Heart right ventricle (tissue), 16 donors: ENCODE measurements at regions of chr3 and their contacts with region 1.

Region 1: GRCh38 chr3:108914774-108915641 is 38.7 kb downstream of the GUCA1C start:
- DNase-seq: peak in 1 of 2 donors; percentile 15
- ATAC-seq: peak in 3 of 8 donors; percentile 46 to 63 (median 55)
- H3K4me3 ChIP-seq: no peak overlapping the region
- H3K27ac ChIP-seq: no peak overlapping the region
- H3K4me1 ChIP-seq: no peaks in the 10 kb centered on the region
- H3K27me3 ChIP-seq: no peaks in the 10 kb centered on the region
- CTCF ChIP-seq: peak; percentile 33 to 87 (median 73)

Region 2: DNA sequence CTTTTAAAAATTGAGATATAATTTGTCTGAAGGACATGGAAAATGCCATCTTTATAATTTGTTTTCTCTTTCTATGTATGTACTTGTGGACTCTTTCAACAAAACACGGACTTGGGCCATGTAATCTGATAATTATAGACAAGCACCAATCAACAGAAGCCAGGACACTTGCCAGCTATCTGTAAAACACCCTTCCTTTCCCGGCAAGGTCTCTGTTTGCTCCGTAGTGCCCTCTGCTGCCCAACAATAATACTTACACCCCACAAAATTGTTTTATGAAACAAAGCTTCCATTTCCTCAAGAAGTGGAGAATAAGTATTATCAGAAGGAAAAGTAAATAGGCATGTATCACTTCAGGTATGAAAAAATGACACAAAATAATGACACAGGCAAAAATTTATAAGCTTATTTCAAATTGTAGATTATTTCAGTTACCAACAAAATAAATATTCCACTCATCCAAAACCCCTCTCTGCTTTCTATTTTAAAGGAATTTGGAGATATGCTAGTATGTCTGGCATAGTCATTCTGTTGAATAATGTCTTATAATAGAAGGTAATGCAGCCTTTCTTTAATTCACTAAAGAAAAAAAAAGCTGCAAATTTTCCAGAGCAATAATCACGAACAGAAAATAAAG is 437.4 kb before region 1 on chr3:
- intact Hi-C with region 1: loop called in 1 of 10 experiments (anchors 5 kb)
- DNase-seq: peak; percentile 14 to 31
- ATAC-seq: peak in 4 of 8 donors; percentile 38 to 77 (median 60)
- H3K4me3 ChIP-seq: no peak overlapping the region
- H3K27ac ChIP-seq: no peak overlapping the region
- H3K4me1 ChIP-seq: peaks cover 0 to 7% (median 0%) of the 10 kb centered on the region in 9 donors
- H3K27me3 ChIP-seq: no peaks in the 10 kb centered on the region
- CTCF ChIP-seq: peak in 8 of 9 donors; percentile 50 to 80 (median 74)

Region 3: DNA sequence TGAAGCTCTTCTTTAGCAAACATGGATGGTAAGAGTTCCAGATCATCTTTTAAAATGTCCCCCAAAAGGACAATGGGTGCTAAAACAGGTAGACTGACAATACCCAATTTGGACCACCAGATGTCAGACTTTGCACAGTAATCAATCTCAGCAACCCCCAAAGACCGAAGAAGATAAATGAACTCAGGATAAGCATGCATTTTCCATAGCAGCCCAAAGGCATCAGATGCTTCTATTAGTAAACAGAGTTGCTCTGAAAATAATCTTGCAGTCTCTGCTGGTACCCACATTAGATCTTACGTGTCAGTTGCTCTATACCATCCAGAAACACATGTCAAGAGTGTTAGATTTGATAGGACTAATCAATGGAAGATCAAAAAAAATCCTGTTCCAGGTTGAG is 425.2 kb before region 1 on chr3:
- intact Hi-C with region 1: loop called in 3 of 10 experiments (anchors 5 to 10 kb)
- DNase-seq: peak in 1 of 2 donors; percentile 15
- ATAC-seq: peak in 6 of 8 donors; percentile 41 to 74 (median 52)
- H3K4me3 ChIP-seq: no peak overlapping the region
- H3K27ac ChIP-seq: no peak overlapping the region
- H3K4me1 ChIP-seq: peaks cover 0 to 13% (median 3%) of the 10 kb centered on the region in 9 donors
- H3K27me3 ChIP-seq: no peaks in the 10 kb centered on the region
- CTCF ChIP-seq: peak; percentile 55 to 83 (median 77)

Region 4: GRCh38 chr3:108662130-108662738 is 252.8 kb before region 1 on chr3:
- intact Hi-C with region 1: loop called in 8 of 10 experiments (anchors 2 to 10 kb)
- DNase-seq: peak in 1 of 2 donors; percentile 14
- ATAC-seq: peak in 7 of 8 donors; percentile 58 to 78 (median 65)
- H3K4me3 ChIP-seq: peak overlapping the region in 2 of 10 donors; percentile 8 to 10
- H3K27ac ChIP-seq: no peak overlapping the region
- H3K4me1 ChIP-seq: peaks cover 0 to 6% (median 0%) of the 10 kb centered on the region in 9 donors
- H3K27me3 ChIP-seq: no peaks in the 10 kb centered on the region
- CTCF ChIP-seq: peak; percentile 52 to 84 (median 78)